CD14-positive monocyte (primary cell): ENCODE measurements at regions of chr14 and their contacts with region 1.

Region 1: GRCh38 chr14:61475316-61475715 is 153.9 kb downstream of the PRKCH start:
- DNase-seq: peak; percentile 73 to 82 (median 79)
- H3K4me3 ChIP-seq: no peak overlapping the region
- H3K4me3 Mint-ChIP-seq: peak overlapping the region in 1 of 2 donors; percentile 48
- H3K27ac ChIP-seq: peak overlapping the region in 1 of 2 donors; percentile 96
- H3K27ac Mint-ChIP-seq: peak overlapping the region; percentile 82 to 99 (median 98)
- H3K4me1 ChIP-seq: peaks cover 95 to 99% of the 10 kb centered on the region in 2 donors
- H3K4me1 Mint-ChIP-seq: peaks cover 95% of the 10 kb centered on the region
- H3K27me3 ChIP-seq: no peaks in the 10 kb centered on the region
- H3K27me3 Mint-ChIP-seq: peaks cover 0 to 3% (median 0%) of the 10 kb centered on the region in 3 donors
- CTCF ChIP-seq: peak; percentile 94

Region 2: DNA sequence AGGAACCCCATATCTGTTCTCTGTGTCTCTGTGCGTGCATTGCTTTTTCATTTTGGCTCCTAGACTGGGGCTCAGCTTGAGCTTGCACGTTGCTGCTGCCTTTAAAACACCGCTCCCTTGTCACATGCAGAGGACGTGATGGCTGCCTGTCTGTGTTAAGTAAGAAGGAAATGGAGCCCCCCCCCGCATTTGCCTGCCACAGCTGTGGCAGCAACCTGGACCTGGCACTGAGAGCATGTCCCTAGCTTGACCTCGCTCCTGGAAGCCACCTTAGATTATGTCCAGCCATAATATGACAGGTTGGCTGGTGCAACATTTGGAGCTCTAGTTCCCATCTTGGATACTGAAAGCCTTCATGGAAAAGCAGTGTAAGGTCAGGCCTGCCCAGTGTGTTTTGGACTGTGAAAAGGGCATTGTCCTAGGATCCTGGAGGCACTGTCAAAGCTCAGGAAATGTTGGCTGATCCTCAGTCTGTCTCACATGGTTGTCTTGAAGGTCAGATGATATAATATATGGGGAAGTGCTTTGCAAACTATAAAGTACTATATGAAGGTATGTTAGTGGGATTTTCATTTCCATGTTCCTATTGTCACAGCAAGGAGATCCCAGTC is 80.1 kb before region 1 on chr14:
- intact Hi-C with region 1: no loop called
- DNase-seq: no peak
- H3K4me3 ChIP-seq: no peak overlapping the region
- H3K4me3 Mint-ChIP-seq: no peak overlapping the region
- H3K27ac ChIP-seq: no peak overlapping the region
- H3K27ac Mint-ChIP-seq: no peak overlapping the region
- H3K4me1 ChIP-seq: peaks cover 0 to 6% of the 10 kb centered on the region in 2 donors
- H3K4me1 Mint-ChIP-seq: peaks cover 13% of the 10 kb centered on the region
- H3K27me3 ChIP-seq: no peaks in the 10 kb centered on the region
- H3K27me3 Mint-ChIP-seq: peaks cover 0 to 2% (median 0%) of the 10 kb centered on the region in 3 donors
- CTCF ChIP-seq: no peak

Region 3: GRCh38 chr14:61525293-61526011 is 50.1 kb after region 1 on chr14:
- intact Hi-C with region 1: loop called (anchors 2 to 5 kb)
- DNase-seq: peak; percentile 93 to 98 (median 94)
- H3K4me3 ChIP-seq: no peak overlapping the region
- H3K4me3 Mint-ChIP-seq: peak overlapping the region in 1 of 2 donors; percentile 36
- H3K27ac ChIP-seq: peak overlapping the region; percentile 22 to 56
- H3K27ac Mint-ChIP-seq: peak overlapping the region in 6 of 7 donors; percentile 70 to 92 (median 88)
- H3K4me1 ChIP-seq: peaks cover 12 to 15% of the 10 kb centered on the region in 2 donors
- H3K4me1 Mint-ChIP-seq: peaks cover 40% of the 10 kb centered on the region
- H3K27me3 ChIP-seq: no peaks in the 10 kb centered on the region
- H3K27me3 Mint-ChIP-seq: no peaks in the 10 kb centered on the region
- CTCF ChIP-seq: no peak

Region 4: GRCh38 chr14:61568572-61569131 is 93.3 kb after region 1 on chr14:
- intact Hi-C with region 1: loop called in 1 of 2 experiments (anchors 2 kb)
- DNase-seq: peak in 2 of 3 donors; percentile 16 to 36
- H3K4me3 ChIP-seq: peak overlapping the region; percentile 7 to 70 (median 15)
- H3K4me3 Mint-ChIP-seq: peak overlapping the region; percentile 81 to 92
- H3K27ac ChIP-seq: peak overlapping the region; percentile 43 to 89
- H3K27ac Mint-ChIP-seq: peak overlapping the region; percentile 98 to 100 (median 100)
- H3K4me1 ChIP-seq: peaks cover 67 to 77% of the 10 kb centered on the region in 2 donors
- H3K4me1 Mint-ChIP-seq: peaks cover 83% of the 10 kb centered on the region
- H3K27me3 ChIP-seq: no peaks in the 10 kb centered on the region
- H3K27me3 Mint-ChIP-seq: peaks cover 0 to 2% (median 2%) of the 10 kb centered on the region in 3 donors
- CTCF ChIP-seq: no peak

Region 5: GRCh38 chr14:61662437-61663311 is 187.4 kb after region 1 on chr14:
- intact Hi-C with region 1: loop called in 1 of 2 experiments (anchors 5 kb)
- DNase-seq: peak; percentile 90 to 94 (median 92)
- H3K4me3 ChIP-seq: peak overlapping the region; percentile 12 to 60 (median 25)
- H3K4me3 Mint-ChIP-seq: peak overlapping the region; percentile 51 to 55
- H3K27ac ChIP-seq: peak overlapping the region; percentile 80 to 87
- H3K27ac Mint-ChIP-seq: peak overlapping the region; percentile 92 to 98 (median 96)
- H3K4me1 ChIP-seq: peaks cover 55 to 68% of the 10 kb centered on the region in 2 donors
- H3K4me1 Mint-ChIP-seq: peaks cover 61% of the 10 kb centered on the region
- H3K27me3 ChIP-seq: no peaks in the 10 kb centered on the region
- H3K27me3 Mint-ChIP-seq: no peaks in the 10 kb centered on the region
- CTCF ChIP-seq: no peak

Region 6: DNA sequence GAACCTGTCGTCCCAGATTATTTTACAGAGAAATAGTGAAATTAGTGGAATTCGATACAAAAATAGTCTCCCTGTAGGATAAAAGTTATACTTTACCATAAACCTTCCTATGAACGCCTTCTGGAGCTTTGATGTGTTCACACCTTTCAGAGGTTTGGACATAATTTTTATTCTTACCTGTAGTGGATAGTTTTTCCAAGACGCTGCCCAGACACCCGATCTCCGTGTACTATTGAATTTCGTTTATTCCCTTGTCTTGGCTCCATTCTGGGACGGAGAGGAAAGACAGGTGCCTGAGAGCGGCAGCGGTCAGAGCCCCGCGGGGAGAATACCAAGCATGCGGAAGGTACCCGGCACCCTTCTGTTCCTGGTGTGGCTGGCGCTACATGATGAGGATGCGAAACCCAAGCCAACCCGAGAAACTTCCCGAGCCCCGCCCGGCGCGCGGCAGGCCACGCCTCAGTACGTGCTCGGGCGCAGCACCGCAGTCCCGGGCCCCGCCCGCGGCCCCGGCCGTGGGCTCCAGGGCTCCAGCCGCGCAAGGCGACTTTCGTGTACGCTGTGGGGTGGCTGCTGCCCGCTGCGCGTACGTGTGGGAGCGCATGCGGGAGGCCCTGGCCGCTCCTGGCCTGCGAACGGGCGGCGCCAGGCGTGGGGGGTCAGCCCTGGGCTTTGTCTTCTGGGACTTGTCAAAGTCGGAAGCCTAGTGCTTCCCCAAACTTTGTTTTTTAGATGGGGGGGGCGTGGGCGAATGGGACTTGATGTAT is 275.6 kb after region 1 on chr14:
- intact Hi-C with region 1: loop called in 1 of 2 experiments (anchors 5 kb)
- DNase-seq: peak; percentile 78 to 88 (median 84)
- H3K4me3 ChIP-seq: peak overlapping the region; percentile 54 to 95 (median 80)
- H3K4me3 Mint-ChIP-seq: peak overlapping the region; percentile 82 to 92
- H3K27ac ChIP-seq: peak overlapping the region; percentile 70 to 84
- H3K27ac Mint-ChIP-seq: peak overlapping the region; percentile 86 to 95 (median 92)
- H3K4me1 ChIP-seq: peaks cover 37 to 49% of the 10 kb centered on the region in 2 donors
- H3K4me1 Mint-ChIP-seq: peaks cover 41% of the 10 kb centered on the region
- H3K27me3 ChIP-seq: no peaks in the 10 kb centered on the region
- H3K27me3 Mint-ChIP-seq: peaks cover 0 to 1% (median 0%) of the 10 kb centered on the region in 3 donors
- CTCF ChIP-seq: no peak